Prostate gland (tissue), 2 donors: ENCODE measurements at regions of chr5 and their contacts with region 1.

Region 1: DNA sequence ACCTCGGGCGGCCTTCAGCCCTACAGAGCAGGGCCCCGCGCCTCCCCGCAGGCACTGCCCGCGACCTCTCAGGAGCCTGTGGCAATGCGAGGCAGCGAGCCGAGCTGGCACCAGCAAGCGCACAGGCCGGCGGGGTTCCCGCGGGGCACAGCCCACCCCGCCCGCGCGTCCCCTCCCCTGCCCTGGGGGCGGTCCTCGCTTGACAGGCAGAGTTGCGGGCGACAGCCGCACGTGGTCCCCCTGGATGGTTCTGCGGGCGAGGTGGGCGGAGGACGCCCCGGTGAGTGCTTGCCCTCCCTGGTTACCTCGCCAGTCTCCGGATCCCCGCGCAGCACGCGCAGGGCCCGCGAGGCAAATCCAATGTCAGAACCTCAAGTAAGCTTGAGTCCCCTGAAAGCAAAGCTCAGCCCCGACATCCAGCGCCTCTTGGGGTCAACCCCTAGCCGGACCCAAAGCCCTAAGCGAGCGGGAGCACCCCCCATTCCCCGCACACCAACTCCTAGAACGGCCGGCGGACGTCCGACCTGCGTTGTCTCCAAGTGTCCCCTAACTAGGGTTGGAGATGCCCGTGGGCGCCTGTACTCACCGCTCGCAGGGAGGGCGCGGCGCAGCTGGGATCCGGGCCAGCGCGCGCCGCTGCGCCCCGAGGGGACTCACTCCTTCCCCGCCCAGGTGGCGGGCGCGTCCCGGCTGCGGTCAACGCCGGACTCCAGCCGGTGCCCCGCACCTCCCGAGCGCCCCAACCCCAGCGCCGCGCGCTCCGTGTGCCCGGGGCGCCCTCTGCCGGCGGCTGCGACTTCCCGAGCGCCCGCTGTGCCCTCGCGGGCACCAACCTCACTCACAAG is at the start of gene DRD1:
- DNase-seq: no peak
- H3K4me3 ChIP-seq: peak within 1 kb of the TSS; percentile 27 to 29
- H3K27ac ChIP-seq: peak within 1 kb of the TSS in 1 of 2 donors; percentile 16
- H3K4me1 ChIP-seq: no peaks in the 10 kb centered on the region
- H3K27me3 ChIP-seq: no peaks in the 10 kb centered on the region
- CTCF ChIP-seq: peak; percentile 66 to 90 (median 85)
- POLR2A ChIP-seq: no peak
- total RNA-seq, gene DRD1: 0.28 to 0.77 TPM

Region 2: DNA sequence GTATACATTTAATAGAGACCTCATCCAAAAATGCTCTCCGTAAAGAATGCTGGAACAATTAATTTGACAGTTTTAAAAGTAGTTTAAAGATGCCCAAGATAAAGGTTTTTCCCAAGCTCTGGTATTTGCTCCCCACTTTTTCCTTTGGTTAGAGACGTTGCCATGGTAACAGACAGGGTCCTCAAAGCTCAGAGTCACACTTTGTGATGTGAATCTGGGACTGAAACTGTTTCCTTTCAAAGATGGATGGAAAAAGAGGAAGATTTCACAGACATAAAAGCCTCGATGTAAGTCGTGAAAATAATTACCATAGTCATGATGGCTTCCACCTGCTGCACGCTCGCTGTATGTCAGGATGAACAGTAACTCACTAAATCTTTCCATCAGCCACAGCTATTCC is 490.4 kb before region 1 on chr5:
- intact Hi-C with region 1: loop called (anchors 2 kb)
- DNase-seq: no peak
- H3K4me3 ChIP-seq: no peak overlapping the region
- H3K27ac ChIP-seq: no peak overlapping the region
- H3K4me1 ChIP-seq: no peaks in the 10 kb centered on the region
- H3K27me3 ChIP-seq: no peaks in the 10 kb centered on the region
- CTCF ChIP-seq: no peak
- POLR2A ChIP-seq: no peak